PC-9 (cell line): ENCODE measurements at regions of chr15 and their contacts with region 1.

Region 1: DNA sequence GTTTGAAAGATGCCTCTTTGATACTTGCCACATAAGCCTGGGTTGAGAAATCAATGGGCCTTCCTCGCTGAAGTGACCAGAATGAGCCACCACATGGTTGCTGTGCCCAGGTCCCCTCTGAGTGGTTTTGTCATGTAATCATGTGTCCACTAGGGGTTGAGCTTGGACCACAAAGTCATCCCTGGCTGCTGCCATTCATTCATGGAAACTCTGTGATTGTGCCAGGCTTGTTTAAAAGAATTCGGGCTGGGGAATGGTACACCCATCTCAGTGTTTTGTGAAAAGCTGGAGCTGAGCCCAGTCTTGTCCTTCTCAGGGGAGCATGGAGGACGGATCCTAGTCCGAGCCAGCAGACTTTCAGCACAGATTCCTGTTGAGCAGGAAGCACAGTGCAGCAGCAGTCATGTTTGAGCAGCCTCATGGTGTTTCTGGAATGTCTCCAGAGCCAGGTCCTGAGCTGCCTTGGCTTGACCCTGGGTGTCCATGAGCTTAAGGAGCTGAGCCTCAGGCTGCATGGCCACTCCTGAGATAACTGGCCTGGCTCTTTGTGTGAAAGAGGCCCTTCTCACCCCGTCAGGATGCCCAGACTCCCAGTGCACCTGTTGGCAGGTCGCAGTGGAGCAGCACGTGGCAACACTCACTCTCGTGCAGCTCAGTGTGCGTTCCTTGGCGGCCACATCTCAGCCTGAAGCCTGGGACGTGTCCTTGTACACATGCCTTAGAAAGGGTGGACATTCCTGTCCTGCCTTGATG is 260.3 kb upstream of the TPM1 start:
- DNase-seq: peak; percentile 63 to 78
- H3K4me3 ChIP-seq: no peak overlapping the region
- H3K27ac ChIP-seq: peak overlapping the region; percentile 48; the same call in 1 of the 2 replicates
- H3K4me1 ChIP-seq: peaks cover 11% of the 10 kb centered on the region
- H3K27me3 ChIP-seq: no peaks in the 10 kb centered on the region
- CTCF ChIP-seq: peak; percentile 80

Region 2: DNA sequence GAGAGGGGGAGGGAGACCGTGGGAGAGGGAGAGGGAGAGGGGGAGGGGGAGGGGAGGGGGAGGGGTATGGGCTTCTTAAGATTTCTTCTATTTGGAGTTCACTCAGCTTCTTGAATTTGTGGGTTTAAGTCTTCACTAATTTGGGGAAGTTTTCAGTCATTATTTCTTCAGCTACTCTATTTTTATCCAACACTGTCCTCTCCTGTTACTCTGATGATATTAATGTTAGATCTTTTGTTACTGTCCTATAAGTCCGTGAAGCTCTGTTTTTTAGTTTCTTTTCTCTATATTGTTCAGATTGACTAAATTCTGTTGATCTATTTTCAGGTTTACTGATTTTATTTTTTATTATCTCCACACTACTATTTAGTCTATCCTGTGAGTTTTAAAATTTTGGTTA is 91.2 kb before region 1 on chr15:
- CTCF ChIA-PET with region 1: no interaction called
- POLR2A ChIA-PET with region 1: no interaction called
- intact Hi-C with region 1: no loop called
- DNase-seq: no peak
- H3K4me3 ChIP-seq: no peak overlapping the region
- H3K27ac ChIP-seq: no peak overlapping the region
- H3K4me1 ChIP-seq: no peaks in the 10 kb centered on the region
- H3K27me3 ChIP-seq: no peaks in the 10 kb centered on the region
- CTCF ChIP-seq: no peak

Region 3: GRCh38 chr15:62896978-62897647 is 114.9 kb after region 1 on chr15:
- CTCF ChIA-PET with region 1: no interaction called
- POLR2A ChIA-PET with region 1: no interaction called
- intact Hi-C with region 1: loop called (anchors 1 kb)
- DNase-seq: peak; percentile 93 to 97
- H3K4me3 ChIP-seq: peak overlapping the region; percentile 47; the same call in 1 of the 2 replicates
- H3K27ac ChIP-seq: peak overlapping the region; percentile 100
- H3K4me1 ChIP-seq: peaks cover 81% of the 10 kb centered on the region
- H3K27me3 ChIP-seq: no peaks in the 10 kb centered on the region
- CTCF ChIP-seq: no peak

Region 4: DNA sequence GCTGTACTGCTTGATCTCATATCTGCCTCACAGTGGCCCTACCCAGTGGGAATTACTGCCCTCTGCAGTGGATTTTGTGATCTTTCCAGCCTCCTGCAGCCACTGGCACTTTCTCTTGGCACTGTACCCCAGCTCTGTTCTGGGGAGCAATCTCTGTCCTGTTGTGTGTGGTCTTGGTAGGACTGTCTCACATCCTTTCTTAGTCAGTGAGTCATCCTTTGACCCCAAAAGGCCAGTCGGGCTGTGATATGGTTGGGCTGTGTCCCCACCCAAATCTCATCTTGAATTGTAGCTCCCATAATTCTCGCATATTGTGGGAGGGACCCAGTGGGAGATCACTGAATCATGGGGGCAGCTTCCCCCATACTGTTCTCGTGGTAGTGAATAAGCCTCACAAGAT is 127.0 kb after region 1 on chr15:
- CTCF ChIA-PET with region 1: no interaction called
- POLR2A ChIA-PET with region 1: no interaction called
- intact Hi-C with region 1: no loop called
- DNase-seq: no peak
- H3K4me3 ChIP-seq: no peak overlapping the region
- H3K27ac ChIP-seq: no peak overlapping the region
- H3K4me1 ChIP-seq: no peaks in the 10 kb centered on the region
- H3K27me3 ChIP-seq: no peaks in the 10 kb centered on the region
- CTCF ChIP-seq: no peak

Region 5: GRCh38 chr15:63019539-63020109 is 237.4 kb after region 1 on chr15:
- CTCF ChIA-PET with region 1: no interaction called
- POLR2A ChIA-PET with region 1: no interaction called
- intact Hi-C with region 1: loop called (anchors 1 kb)
- DNase-seq: peak; percentile 91 to 94
- H3K4me3 ChIP-seq: no peak overlapping the region; the same call in 1 of the 2 replicates
- H3K27ac ChIP-seq: peak overlapping the region; percentile 75
- H3K4me1 ChIP-seq: peaks cover 51% of the 10 kb centered on the region
- H3K27me3 ChIP-seq: no peaks in the 10 kb centered on the region
- CTCF ChIP-seq: no peak

Region 6: DNA sequence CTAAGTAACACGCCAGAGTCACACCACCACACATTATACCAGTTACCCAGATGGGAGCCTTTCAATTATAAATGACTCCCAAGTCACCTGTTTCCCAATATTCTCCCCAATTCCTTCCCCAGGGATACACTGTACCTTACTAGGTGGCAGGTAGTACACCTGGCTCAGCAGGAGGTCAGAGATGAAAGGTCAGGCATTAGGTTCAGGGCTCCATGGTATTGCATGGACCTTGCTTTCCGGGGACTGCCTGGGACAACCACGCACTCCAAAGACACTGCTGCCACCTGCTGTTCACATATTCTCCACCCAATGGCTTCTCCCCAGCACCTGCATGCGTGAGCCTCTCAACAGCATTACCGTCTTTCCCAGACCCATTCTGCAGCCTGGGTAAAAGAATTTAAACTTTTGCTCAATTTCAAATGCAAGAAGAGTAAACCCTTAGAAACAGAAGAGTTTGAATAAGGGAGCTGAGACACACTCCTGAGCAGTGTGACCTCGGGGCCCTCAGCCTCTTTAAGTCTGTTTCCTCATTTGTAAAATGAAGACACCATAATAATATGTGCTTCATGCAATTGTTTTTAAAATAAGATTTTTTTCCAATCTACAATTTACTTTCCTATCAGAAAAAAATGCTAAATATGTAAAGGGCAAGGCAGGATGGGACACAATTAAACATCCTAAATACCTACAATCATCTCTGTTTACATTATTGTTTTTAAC is 311.4 kb after region 1 on chr15:
- CTCF ChIA-PET with region 1: interaction called, 6 read pairs
- POLR2A ChIA-PET with region 1: no interaction called
- intact Hi-C with region 1: loop called (anchors 1 kb)
- DNase-seq: peak in 1 of 2 experiments; percentile 70
- H3K4me3 ChIP-seq: no peak overlapping the region
- H3K27ac ChIP-seq: no peak overlapping the region
- H3K4me1 ChIP-seq: no peaks in the 10 kb centered on the region
- H3K27me3 ChIP-seq: no peaks in the 10 kb centered on the region
- CTCF ChIP-seq: peak; percentile 78

Region 7: GRCh38 chr15:63122002-63122893 is 340.0 kb after region 1 on chr15:
- CTCF ChIA-PET with region 1: no interaction called
- POLR2A ChIA-PET with region 1: no interaction called
- intact Hi-C with region 1: no loop called
- DNase-seq: peak; percentile 66 to 88
- H3K4me3 ChIP-seq: peak overlapping the region; percentile 77
- H3K27ac ChIP-seq: no peak overlapping the region
- H3K4me1 ChIP-seq: no peaks in the 10 kb centered on the region; the same call in 1 of the 2 replicates
- H3K27me3 ChIP-seq: no peaks in the 10 kb centered on the region
- CTCF ChIP-seq: peak; percentile 58; the same call in 1 of the 2 replicates

Region 8: GRCh38 chr15:63402498-63403253 is 620.5 kb after region 1 on chr15:
- CTCF ChIA-PET with region 1: no interaction called
- POLR2A ChIA-PET with region 1: no interaction called
- intact Hi-C with region 1: loop called (anchors 5 kb)
- DNase-seq: no peak
- H3K4me3 ChIP-seq: no peak overlapping the region
- H3K27ac ChIP-seq: no peak overlapping the region
- H3K4me1 ChIP-seq: no peaks in the 10 kb centered on the region
- H3K27me3 ChIP-seq: no peaks in the 10 kb centered on the region
- CTCF ChIP-seq: peak; percentile 70